Naive thymus-derived CD4-positive, alpha-beta T cell (primary cell): ENCODE measurements at regions of chr1 and their contacts with region 1.

Region 1: DNA sequence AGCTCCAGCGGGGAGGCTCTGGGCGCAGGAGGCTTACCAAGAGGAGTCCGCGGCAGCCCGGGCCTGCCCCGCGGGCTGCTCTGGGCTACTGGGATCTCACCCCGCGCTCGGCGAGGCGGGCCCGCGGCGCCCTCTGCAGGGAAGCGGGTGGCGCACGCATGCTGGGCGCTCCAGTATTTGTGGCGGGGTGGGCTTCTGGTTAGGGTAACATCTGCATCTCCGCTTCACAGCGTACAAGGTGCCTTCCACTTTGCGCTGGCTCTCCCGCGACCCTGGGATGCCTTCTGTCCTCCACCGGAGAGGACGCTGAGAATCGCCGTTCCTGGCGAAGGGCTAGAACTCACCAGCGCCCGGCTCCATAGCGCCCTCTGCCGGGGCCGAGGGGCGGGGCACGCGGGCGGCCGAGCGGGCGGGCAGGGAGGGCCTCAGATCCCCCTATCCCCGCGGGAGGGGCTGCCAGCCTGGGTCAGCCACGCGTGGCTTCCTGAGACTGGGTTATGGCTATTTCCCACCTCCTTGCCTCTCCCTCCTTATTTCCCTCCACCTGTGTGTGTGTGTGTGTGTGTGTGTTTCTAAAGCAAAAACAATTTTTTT is 46.6 kb upstream of the CTBS start:
- DNase-seq: peak; percentile 60 to 95 (median 84)
- ATAC-seq: peak; percentile 96
- H3K4me3 ChIP-seq: peak overlapping the region; percentile 85
- H3K4me3 Mint-ChIP-seq: peak overlapping the region; percentile 85 to 97 (median 92)
- H3K27ac ChIP-seq: peak overlapping the region; percentile 68
- H3K27ac Mint-ChIP-seq: peak overlapping the region in 6 of 9 donors; percentile 53 to 89 (median 82)
- H3K4me1 ChIP-seq: peaks cover 0 to 3% of the 10 kb centered on the region in 2 donors
- H3K4me1 Mint-ChIP-seq: peaks cover 0 to 18% (median 5%) of the 10 kb centered on the region in 7 donors
- H3K27me3 ChIP-seq: no peaks in the 10 kb centered on the region
- H3K27me3 Mint-ChIP-seq: peaks cover 0 to 7% (median 0%) of the 10 kb centered on the region in 5 donors

Region 2: GRCh38 chr1:83905315-83905907 is 715.4 kb before region 1 on chr1:
- CTCF ChIA-PET with region 1: no interaction called
- POLR2A ChIA-PET with region 1: no interaction called
- intact Hi-C with region 1: loop called in 1 of 2 experiments (anchors 10 kb)
- DNase-seq: peak in 5 of 9 donors; percentile 16 to 34 (median 25)
- ATAC-seq: peak; percentile 53
- H3K4me3 ChIP-seq: no peak overlapping the region
- H3K4me3 Mint-ChIP-seq: no peak overlapping the region
- H3K27ac ChIP-seq: no peak overlapping the region
- H3K27ac Mint-ChIP-seq: no peak overlapping the region
- H3K4me1 ChIP-seq: no peaks in the 10 kb centered on the region
- H3K4me1 Mint-ChIP-seq: no peaks in the 10 kb centered on the region
- H3K27me3 ChIP-seq: no peaks in the 10 kb centered on the region
- H3K27me3 Mint-ChIP-seq: peaks cover 9 to 23% (median 20%) of the 10 kb centered on the region in 5 donors

Region 3: DNA sequence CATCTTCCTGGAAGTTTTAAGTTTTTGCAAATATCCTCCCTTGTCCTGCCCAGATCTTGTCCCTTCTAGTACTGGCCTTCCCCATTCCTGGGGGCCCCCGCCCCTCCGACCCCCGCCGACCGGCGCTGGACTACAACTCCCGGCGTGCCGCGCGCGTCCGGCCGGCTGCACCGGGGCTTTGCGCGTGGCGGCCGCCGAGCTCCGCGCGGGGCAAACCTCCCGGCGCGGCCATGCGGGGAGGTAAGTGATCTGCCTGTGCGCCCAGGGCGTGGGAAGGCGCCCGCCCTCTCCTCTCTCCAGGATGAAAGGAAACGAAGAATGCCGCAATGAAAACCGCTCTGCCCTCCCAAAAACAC is 322.5 kb before region 1 on chr1:
- CTCF ChIA-PET with region 1: no interaction called
- POLR2A ChIA-PET with region 1: no interaction called
- intact Hi-C with region 1: loop called (anchors 2 to 5 kb)
- DNase-seq: peak; percentile 40 to 65 (median 46)
- ATAC-seq: peak; percentile 88
- H3K4me3 ChIP-seq: peak overlapping the region; percentile 92
- H3K4me3 Mint-ChIP-seq: peak overlapping the region; percentile 83 to 95 (median 90)
- H3K27ac ChIP-seq: peak overlapping the region; percentile 69
- H3K27ac Mint-ChIP-seq: peak overlapping the region; percentile 67 to 85 (median 79)
- H3K4me1 ChIP-seq: peaks cover 4 to 25% of the 10 kb centered on the region in 2 donors
- H3K4me1 Mint-ChIP-seq: peaks cover 17 to 52% (median 42%) of the 10 kb centered on the region in 7 donors
- H3K27me3 ChIP-seq: no peaks in the 10 kb centered on the region
- H3K27me3 Mint-ChIP-seq: peaks cover 0 to 16% (median 6%) of the 10 kb centered on the region in 5 donors

Region 4: GRCh38 chr1:84478876-84479868 is 141.6 kb before region 1 on chr1 and contains the start of gene RPF1:
- CTCF ChIA-PET with region 1: interaction called, 5 read pairs
- POLR2A ChIA-PET with region 1: no interaction called
- intact Hi-C with region 1: loop called (anchors 1 kb)
- DNase-seq: peak; percentile 61 to 88 (median 83)
- ATAC-seq: peak; percentile 97
- H3K4me3 ChIP-seq: peak within 1 kb of the TSS; percentile 72
- H3K4me3 Mint-ChIP-seq: peak within 1 kb of the TSS; percentile 88 to 100 (median 98)
- H3K27ac ChIP-seq: peak within 1 kb of the TSS; percentile 80
- H3K27ac Mint-ChIP-seq: peak within 1 kb of the TSS; percentile 98 to 100 (median 99)
- H3K4me1 ChIP-seq: peaks cover 22 to 28% of the 10 kb centered on the region in 2 donors
- H3K4me1 Mint-ChIP-seq: peaks cover 29 to 60% (median 49%) of the 10 kb centered on the region in 7 donors
- H3K27me3 ChIP-seq: peaks cover 0 to 7% of the 10 kb centered on the region in 2 donors
- H3K27me3 Mint-ChIP-seq: peaks cover 21 to 35% (median 26%) of the 10 kb centered on the region in 5 donors
- total RNA-seq, gene RPF1: 35.5 to 52.3 (median 44.1) TPM

Region 5: DNA sequence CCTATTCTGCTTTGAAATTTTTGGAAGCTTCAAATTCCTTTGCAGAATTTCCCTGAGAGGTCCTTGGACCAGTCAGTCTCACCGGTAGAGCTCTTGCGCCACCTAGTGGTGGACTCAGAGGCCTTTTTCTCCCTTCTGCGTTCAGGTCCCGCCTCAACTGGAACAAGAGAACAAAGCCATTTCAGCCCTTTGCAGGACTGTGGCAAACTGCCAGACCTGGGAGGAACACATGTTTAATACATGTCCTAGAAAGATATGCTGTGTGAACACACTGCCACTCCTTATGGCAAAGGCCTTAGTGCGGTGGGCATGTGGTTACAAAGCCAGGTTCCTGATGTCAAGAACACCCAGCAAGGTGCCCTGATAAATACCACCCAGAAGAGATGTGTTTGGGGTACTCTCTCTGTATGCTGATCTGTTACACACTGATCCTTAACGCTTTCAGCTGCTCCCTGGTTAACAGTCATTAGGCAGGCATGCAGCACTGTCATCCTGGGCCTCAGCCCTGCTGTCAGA is 151.7 kb after region 1 on chr1:
- CTCF ChIA-PET with region 1: interaction called, 3 read pairs
- POLR2A ChIA-PET with region 1: no interaction called
- intact Hi-C with region 1: loop called (anchors 1 to 5 kb)
- DNase-seq: peak; percentile 51 to 74 (median 64)
- ATAC-seq: peak; percentile 83
- H3K4me3 ChIP-seq: no peak overlapping the region
- H3K4me3 Mint-ChIP-seq: no peak overlapping the region
- H3K27ac ChIP-seq: no peak overlapping the region
- H3K27ac Mint-ChIP-seq: no peak overlapping the region
- H3K4me1 ChIP-seq: no peaks in the 10 kb centered on the region
- H3K4me1 Mint-ChIP-seq: peaks cover 0 to 4% (median 0%) of the 10 kb centered on the region in 7 donors
- H3K27me3 ChIP-seq: no peaks in the 10 kb centered on the region
- H3K27me3 Mint-ChIP-seq: peaks cover 5 to 31% (median 9%) of the 10 kb centered on the region in 5 donors